Activated CD4-positive, alpha-beta T cell treated with anti-CD3 and anti-CD28 coated beads for 36 hours (primary cell): ENCODE measurements at regions of chr3 and their contacts with region 1.

Region 1: DNA sequence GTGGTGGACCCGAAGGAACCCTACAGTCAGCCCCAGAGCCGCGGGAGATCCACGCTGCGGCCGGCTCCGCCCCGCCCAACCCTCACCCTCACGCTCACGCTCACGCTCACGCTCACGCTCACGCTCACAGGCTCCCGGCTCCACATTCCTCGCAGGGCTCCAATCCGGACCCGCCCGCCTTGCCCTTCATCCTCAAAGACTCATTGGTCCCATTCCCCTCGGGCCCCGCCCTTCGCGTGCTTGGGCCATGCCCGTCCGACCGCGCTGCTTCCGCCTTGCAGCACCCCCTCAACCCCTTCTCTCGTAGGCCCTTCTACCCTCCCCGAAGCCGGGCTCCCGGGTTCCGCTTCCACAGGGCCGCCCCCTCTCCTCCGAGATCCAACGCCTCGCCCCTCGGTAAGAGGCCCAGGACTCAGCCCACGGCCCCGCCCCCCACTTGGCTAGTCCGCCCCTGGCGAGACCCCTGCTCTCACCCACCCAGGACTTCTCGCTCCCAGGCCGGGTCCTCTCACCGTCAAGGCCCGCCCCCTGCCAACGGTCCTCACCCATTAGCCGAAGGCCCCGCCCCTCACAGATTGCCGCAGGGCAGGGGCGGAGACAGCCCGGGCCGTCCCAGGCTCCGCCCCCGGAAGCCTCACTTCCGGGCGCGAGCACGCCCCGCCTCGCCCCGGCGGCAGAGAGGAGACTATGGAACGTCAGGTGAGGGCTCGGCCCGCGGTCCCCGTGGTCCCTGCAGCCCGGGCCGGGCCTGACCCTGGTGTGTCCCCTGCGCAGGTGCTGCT is at the start of gene APEH:
- DNase-seq: peak; percentile 99
- ATAC-seq: peak; percentile 91
- H3K4me3 Mint-ChIP-seq: peak within 1 kb of the TSS; percentile 88
- H3K27ac Mint-ChIP-seq: peak within 1 kb of the TSS; percentile 94
- H3K4me1 Mint-ChIP-seq: peaks cover 29% of the 10 kb centered on the region
- H3K27me3 Mint-ChIP-seq: no peaks in the 10 kb centered on the region
- total RNA-seq, gene APEH: 110 to 137 TPM

Region 2: GRCh38 chr3:48898383-48899234 is 775.3 kb before region 1 on chr3 and contains the start of gene SLC25A20:
- CTCF ChIA-PET with region 1: no interaction called
- POLR2A ChIA-PET with region 1: no interaction called
- intact Hi-C with region 1: loop called in 1 of 2 experiments (anchors 2 kb)
- DNase-seq: peak; percentile 96
- ATAC-seq: peak; percentile 96
- H3K4me3 Mint-ChIP-seq: peak within 1 kb of the TSS; percentile 90
- H3K27ac Mint-ChIP-seq: peak within 1 kb of the TSS; percentile 92
- H3K4me1 Mint-ChIP-seq: peaks cover 30% of the 10 kb centered on the region
- H3K27me3 Mint-ChIP-seq: no peaks in the 10 kb centered on the region
- total RNA-seq, gene SLC25A20: 15.8 to 18.5 TPM

Region 3: GRCh38 chr3:49093853-49094767 is 579.8 kb before region 1 on chr3 and contains the start of gene QRICH1:
- CTCF ChIA-PET with region 1: no interaction called
- POLR2A ChIA-PET with region 1: no interaction called
- intact Hi-C with region 1: loop called in 1 of 2 experiments (anchors 1 kb)
- DNase-seq: peak; percentile 98
- ATAC-seq: peak; percentile 86
- H3K4me3 Mint-ChIP-seq: peak within 1 kb of the TSS; percentile 90
- H3K27ac Mint-ChIP-seq: peak within 1 kb of the TSS; percentile 94
- H3K4me1 Mint-ChIP-seq: peaks cover 33% of the 10 kb centered on the region
- H3K27me3 Mint-ChIP-seq: no peaks in the 10 kb centered on the region
- total RNA-seq, gene QRICH1: 119 to 171 TPM

Region 4: DNA sequence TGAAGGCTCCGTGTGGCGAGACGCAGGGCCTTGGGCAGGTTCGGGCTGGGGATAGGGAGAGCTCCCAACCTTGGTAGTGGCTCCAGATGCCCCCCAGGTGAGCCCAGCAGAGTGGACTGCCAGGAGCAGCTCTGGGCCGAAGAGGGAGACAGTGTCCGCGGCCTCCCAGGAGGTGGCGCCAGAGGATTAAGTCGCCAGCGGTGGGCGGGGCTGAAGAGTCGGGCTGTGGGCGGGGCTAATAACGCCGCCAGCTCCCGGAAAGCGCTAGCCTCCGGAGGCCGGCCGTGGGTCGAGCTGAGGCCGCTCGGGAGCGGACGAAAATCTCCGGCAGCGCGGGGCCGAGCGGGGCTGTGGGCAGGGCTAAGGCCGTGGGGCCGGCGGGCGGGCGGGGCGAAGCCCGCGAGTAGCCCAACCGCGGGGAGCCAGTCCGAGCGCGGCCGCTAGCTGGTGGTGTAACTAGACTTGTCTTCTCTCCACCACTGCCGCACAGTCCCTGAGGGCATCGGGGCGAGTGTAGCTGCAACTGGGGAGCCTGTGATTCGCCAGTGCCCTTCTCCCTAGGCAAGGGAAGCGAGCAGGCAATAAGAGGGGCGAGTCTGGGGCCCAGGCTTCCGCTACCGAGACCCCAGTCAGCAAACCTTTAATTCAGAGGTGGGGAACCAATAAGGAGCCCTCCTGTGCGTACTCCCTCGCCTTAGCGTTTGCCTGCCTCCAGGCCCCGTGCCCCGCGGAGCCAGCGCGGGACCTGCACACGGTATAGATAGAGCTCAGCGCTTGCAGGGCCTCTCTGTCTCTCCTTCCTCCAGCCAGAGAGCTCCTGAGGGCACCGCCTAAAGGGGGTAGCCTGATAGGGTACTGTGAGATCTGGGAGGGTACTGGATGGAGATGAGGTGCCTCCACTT is 134.0 kb before region 1 on chr3:
- CTCF ChIA-PET with region 1: interaction called, 122 read pairs
- POLR2A ChIA-PET with region 1: interaction called, 14 read pairs
- intact Hi-C with region 1: loop called (anchors 1 kb)
- DNase-seq: peak; percentile 96
- ATAC-seq: peak; percentile 96
- H3K4me3 Mint-ChIP-seq: peak overlapping the region; percentile 62
- H3K27ac Mint-ChIP-seq: no peak overlapping the region
- H3K4me1 Mint-ChIP-seq: no peaks in the 10 kb centered on the region
- H3K27me3 Mint-ChIP-seq: no peaks in the 10 kb centered on the region

Region 5: GRCh38 chr3:49723628-49724551 is 50.0 kb after region 1 on chr3 and contains the start of gene GMPPB:
- CTCF ChIA-PET with region 1: no interaction called
- POLR2A ChIA-PET with region 1: no interaction called
- intact Hi-C with region 1: loop called in 1 of 2 experiments (anchors 1 kb)
- DNase-seq: peak; percentile 97
- ATAC-seq: peak; percentile 87
- H3K4me3 Mint-ChIP-seq: peak within 1 kb of the TSS; percentile 92
- H3K27ac Mint-ChIP-seq: peak within 1 kb of the TSS; percentile 96
- H3K4me1 Mint-ChIP-seq: peaks cover 22% of the 10 kb centered on the region
- H3K27me3 Mint-ChIP-seq: no peaks in the 10 kb centered on the region
- total RNA-seq, gene GMPPB: 21.0 to 32.1 TPM

Region 6: GRCh38 chr3:49939858-49940666 is 266.2 kb after region 1 on chr3 and contains the start of gene RBM6:
- CTCF ChIA-PET with region 1: no interaction called
- POLR2A ChIA-PET with region 1: no interaction called
- intact Hi-C with region 1: loop called in 1 of 2 experiments (anchors 1 kb)
- DNase-seq: peak; percentile 98
- ATAC-seq: peak; percentile 99
- H3K4me3 Mint-ChIP-seq: peak within 1 kb of the TSS; percentile 98
- H3K27ac Mint-ChIP-seq: peak within 1 kb of the TSS; percentile 91
- H3K4me1 Mint-ChIP-seq: peaks cover 20% of the 10 kb centered on the region
- H3K27me3 Mint-ChIP-seq: no peaks in the 10 kb centered on the region
- total RNA-seq, gene RBM6: 69.3 to 75.1 TPM

Region 7: GRCh38 chr3:50454481-50455070 is 780.7 kb after region 1 on chr3:
- CTCF ChIA-PET with region 1: no interaction called
- POLR2A ChIA-PET with region 1: no interaction called
- intact Hi-C with region 1: no loop called
- DNase-seq: no peak
- ATAC-seq: no peak
- H3K4me3 Mint-ChIP-seq: no peak overlapping the region
- H3K27ac Mint-ChIP-seq: no peak overlapping the region
- H3K4me1 Mint-ChIP-seq: peaks cover 11% of the 10 kb centered on the region
- H3K27me3 Mint-ChIP-seq: no peaks in the 10 kb centered on the region